IMR-90 (cell line): ENCODE measurements at regions of chr19 and their contacts with region 1.

Region 1: DNA sequence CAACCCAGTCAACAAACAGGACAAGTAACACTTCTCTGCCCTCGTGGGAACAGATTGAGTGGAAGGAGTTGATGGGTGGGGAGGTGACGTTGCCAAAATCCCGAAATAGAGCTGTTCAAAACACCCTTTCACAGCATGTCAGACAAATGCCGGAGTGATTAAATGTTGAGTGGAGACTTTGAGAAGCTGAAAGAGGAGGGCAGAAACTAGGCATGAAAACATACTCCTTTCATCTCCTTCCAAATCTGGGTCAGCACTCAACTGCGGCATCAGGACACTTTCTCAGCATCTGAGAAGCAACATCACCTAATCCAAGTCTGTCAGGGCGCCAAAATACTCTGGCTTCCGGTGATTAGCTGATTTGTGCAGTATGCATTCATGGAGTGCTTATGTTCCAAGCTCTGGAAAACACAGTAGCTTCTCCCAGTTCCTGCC is 51.5 kb upstream of the MRI1 start:
- DNase-seq: no peak
- ATAC-seq: no peak
- H3K4me3 ChIP-seq: no peak overlapping the region
- H3K27ac ChIP-seq: no peak overlapping the region
- H3K4me1 ChIP-seq: peaks cover 3% of the 10 kb centered on the region
- H3K27me3 ChIP-seq: peaks cover 6% of the 10 kb centered on the region
- CTCF ChIP-seq: no peak
- POLR2A ChIP-seq: no peak
- RAD21 ChIP-seq: no peak

Region 2: DNA sequence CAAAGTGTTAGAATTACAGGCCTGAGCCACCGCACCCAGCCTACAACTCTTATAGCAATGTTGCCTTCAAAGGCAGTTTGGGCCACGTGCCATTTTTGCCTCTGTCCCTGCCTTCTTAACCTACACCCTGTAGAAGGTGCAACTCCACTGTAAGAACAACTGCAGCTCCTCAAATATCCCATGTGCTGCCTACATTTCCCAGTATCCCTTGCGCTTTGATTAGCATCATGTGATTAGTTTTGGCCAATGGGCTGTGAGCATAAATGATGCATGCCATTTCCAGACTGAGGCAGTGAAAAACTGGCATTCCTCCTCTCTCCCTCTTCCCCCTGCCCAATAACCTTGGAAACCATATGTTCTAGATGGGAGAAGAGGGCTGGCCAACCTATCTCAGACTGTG is 23.7 kb before region 1 on chr19:
- CTCF ChIA-PET with region 1: interaction called, 10 read pairs
- POLR2A ChIA-PET with region 1: no interaction called
- dilution Hi-C with region 1: no loop called
- in situ Hi-C with region 1: no loop called
- intact Hi-C with region 1: no loop called
- DNase-seq: peak; percentile 15
- ATAC-seq: peak; percentile 49; the same call in 1 of the 2 replicates
- H3K4me3 ChIP-seq: no peak overlapping the region
- H3K27ac ChIP-seq: no peak overlapping the region
- H3K4me1 ChIP-seq: no peaks in the 10 kb centered on the region
- H3K27me3 ChIP-seq: peaks cover 9% of the 10 kb centered on the region
- CTCF ChIP-seq: no peak
- POLR2A ChIP-seq: no peak
- RAD21 ChIP-seq: no peak